ENCODE measurements at regions of chrX and their contacts with region 1.

Region 1: DNA sequence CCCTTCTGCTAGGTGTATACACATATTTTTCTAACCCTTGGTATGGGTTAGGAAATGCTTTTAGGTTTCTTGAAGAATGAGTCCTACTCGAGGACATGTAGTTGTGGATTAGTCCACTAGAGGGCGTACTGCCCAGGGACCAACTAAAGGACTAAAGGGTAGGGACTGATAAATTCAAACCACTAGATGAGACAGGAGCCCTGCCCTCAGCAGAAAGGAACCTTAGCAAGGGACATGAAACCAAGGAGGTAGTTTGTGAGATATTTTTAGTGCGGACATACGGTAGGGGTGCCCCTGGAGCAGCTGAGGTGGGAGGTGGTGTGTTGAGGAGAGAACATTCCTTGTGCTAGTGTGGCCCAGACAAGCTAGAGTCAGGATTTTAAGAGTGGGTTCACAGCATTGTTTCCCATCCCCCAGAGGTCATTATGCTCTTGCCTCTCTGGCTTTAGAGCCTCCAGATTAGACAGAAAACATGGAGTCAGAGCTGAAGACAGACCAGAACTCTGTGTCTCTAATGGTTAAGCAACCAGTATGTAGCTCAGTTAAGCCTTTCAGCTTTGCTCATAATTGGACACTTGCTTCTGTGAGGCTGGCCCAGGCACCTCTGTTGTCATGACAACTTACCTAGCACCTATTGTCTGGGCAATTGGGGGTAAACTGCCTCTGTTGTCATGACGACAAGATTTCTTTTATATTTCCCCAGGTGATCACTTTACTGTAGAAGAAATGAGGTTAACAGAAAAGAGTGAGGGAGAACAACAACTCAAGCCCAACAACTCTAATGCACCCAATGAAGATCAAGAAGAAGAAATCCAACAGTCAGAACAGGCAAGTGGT is 1.0 kb downstream of the TMEM31 start:
- DNase-seq: peak; percentile 19
- H3K4me3 Mint-ChIP-seq: no peak overlapping the region
- H3K27ac Mint-ChIP-seq: no peak overlapping the region
- H3K4me1 Mint-ChIP-seq: no peaks in the 10 kb centered on the region
- H3K27me3 Mint-ChIP-seq: peaks cover 7% of the 10 kb centered on the region

Region 2: DNA sequence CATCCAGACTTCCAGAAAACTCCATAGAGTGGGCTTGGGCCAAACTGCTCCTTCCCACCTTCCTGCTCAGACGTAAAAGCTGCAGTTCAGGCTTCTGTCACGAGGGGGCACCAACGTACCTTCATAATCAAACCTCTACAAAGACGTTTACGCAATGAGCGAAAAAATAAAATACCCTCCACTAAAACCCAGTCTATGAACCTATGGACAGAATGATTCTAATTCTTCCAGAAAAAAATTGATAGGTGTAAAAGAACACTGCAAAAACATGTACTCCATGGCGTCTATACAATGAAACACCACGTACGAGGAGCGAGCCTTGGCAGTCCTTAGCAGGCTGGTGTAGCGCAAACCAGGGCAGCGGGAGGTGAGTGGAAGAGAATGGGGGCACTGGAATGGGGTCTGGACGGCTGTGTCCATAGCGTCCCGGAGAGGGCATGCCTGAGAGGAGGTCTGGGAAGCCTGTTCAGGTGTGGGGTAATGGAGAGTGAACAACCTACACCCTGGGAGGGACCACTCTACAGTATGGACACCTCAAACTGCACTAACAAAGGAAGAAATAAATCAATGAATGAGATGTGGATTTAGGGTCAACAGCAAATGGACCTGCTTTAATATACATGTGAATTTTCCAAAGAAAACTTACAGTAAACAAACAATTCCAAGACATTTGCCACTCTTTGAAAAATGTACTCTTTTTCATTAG is 178.1 kb before region 1 on chrX:
- intact Hi-C with region 1: loop called (anchors 1 kb)
- DNase-seq: peak; percentile 33
- H3K4me3 Mint-ChIP-seq: peak overlapping the region; percentile 74
- H3K27ac Mint-ChIP-seq: no peak overlapping the region
- H3K4me1 Mint-ChIP-seq: peaks cover 6% of the 10 kb centered on the region
- H3K27me3 Mint-ChIP-seq: peaks cover 6% of the 10 kb centered on the region

Region 3: GRCh38 chrX:103686199-103687072 is 25.3 kb before region 1 on chrX and contains the start of gene MORF4L2:
- intact Hi-C with region 1: no loop called
- DNase-seq: peak; percentile 85
- H3K4me3 Mint-ChIP-seq: peak within 1 kb of the TSS; percentile 90
- H3K27ac Mint-ChIP-seq: peak within 1 kb of the TSS; percentile 90
- H3K4me1 Mint-ChIP-seq: peaks cover 11% of the 10 kb centered on the region
- H3K27me3 Mint-ChIP-seq: no peaks in the 10 kb centered on the region
- total RNA-seq, gene MORF4L2: 225 and 229 TPM in 2 replicates

Region 4: GRCh38 chrX:103774070-103774642 is 62.4 kb after region 1 on chrX:
- intact Hi-C with region 1: no loop called
- DNase-seq: no peak
- H3K4me3 Mint-ChIP-seq: no peak overlapping the region
- H3K27ac Mint-ChIP-seq: no peak overlapping the region
- H3K4me1 Mint-ChIP-seq: no peaks in the 10 kb centered on the region
- H3K27me3 Mint-ChIP-seq: peaks cover 7% of the 10 kb centered on the region

Region 5: GRCh38 chrX:104565791-104566680 is 854.3 kb after region 1 on chrX and contains the start of gene IL1RAPL2:
- intact Hi-C with region 1: no loop called
- DNase-seq: no peak
- H3K4me3 Mint-ChIP-seq: no peak within 1 kb of the TSS
- H3K27ac Mint-ChIP-seq: no peak within 1 kb of the TSS
- H3K4me1 Mint-ChIP-seq: no peaks in the 10 kb centered on the region
- H3K27me3 Mint-ChIP-seq: peaks cover 23% of the 10 kb centered on the region
- total RNA-seq, gene IL1RAPL2: not detected in 2 replicates